ENCODE measurements at regions of chr1 and their contacts with region 1.

Region 1: GRCh38 chr1:232599178-232600041 is 30.5 kb downstream of the SIPA1L2 start:
- DNase-seq: peak; percentile 69
- H3K4me3 ChIP-seq: peak overlapping the region; percentile 29
- H3K27ac ChIP-seq: peak overlapping the region; percentile 42
- H3K4me1 ChIP-seq: peaks cover 73% of the 10 kb centered on the region
- CTCF ChIP-seq: no peak

Region 2: DNA sequence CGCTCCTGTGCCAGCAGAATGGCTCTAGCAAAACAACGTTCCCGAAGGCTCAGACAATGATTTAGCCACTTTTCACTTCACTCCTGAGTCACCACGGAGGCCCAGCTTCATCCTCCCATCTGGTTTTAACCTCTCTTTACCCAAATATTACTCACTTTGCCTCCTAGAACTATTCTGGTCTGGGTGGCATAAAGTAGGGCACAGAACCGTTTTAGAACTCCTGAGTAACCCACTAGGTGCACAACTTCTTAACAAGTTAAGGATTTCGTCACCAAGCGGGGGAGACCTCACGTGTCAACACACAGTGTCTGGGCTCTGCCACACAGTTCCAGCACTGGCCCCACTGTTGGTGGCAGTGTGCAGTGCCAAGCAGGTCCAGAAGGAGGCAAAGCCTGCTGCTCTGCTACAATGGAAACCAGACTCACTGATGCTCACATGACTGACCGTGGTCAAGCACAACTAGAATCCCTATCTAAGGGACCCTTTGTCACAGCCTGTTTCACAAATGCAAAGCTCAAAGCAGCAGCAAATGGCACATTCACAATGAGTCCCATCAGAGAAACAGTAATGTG is 91.2 kb before region 1 on chr1:
- CTCF ChIA-PET with region 1: no interaction called
- POLR2A ChIA-PET with region 1: no interaction called
- intact Hi-C with region 1: no loop called
- DNase-seq: no peak
- H3K4me3 ChIP-seq: no peak overlapping the region
- H3K27ac ChIP-seq: no peak overlapping the region
- H3K4me1 ChIP-seq: peaks cover 37% of the 10 kb centered on the region
- CTCF ChIP-seq: 0 out of 2 replicates have a peak, but pooled peaks have one; percentile 14

Region 3: GRCh38 chr1:232562855-232563510 is 36.4 kb before region 1 on chr1:
- CTCF ChIA-PET with region 1: interaction called, 4 read pairs
- POLR2A ChIA-PET with region 1: interaction called, 115 read pairs
- intact Hi-C with region 1: loop called (anchors 2 kb)
- DNase-seq: peak; percentile 85
- H3K4me3 ChIP-seq: peak overlapping the region; percentile 33
- H3K27ac ChIP-seq: peak overlapping the region; percentile 96
- H3K4me1 ChIP-seq: peaks cover 100% of the 10 kb centered on the region
- CTCF ChIP-seq: no peak

Region 4: DNA sequence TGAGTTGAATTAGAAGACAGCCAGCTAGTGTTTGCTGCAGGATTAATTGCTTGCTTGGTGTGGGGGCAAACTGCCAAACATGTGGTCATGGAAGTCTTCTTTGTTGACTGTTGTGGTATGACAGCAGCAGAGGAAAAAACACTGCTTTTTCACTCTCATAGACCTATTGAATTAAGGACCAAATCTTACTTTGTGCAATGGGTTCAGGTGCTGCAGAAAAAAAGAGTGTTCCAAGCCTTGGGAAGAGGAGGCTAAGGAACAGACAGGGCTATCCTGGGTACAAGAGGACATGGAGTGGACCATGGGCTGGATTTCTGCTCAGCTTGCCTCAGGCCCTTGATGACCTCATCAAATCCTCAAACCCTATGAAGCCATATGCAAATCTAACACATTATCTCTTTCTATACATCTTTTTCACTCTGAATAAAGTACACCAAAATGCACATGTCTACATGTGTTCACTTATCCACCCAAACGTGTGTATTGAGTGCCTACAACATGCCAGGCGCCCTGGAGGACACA is 31.0 kb before region 1 on chr1:
- CTCF ChIA-PET with region 1: interaction called, 4 read pairs
- POLR2A ChIA-PET with region 1: interaction called, 115 read pairs
- intact Hi-C with region 1: loop called (anchors 2 kb)
- DNase-seq: no peak
- H3K4me3 ChIP-seq: no peak overlapping the region
- H3K27ac ChIP-seq: peak overlapping the region; percentile 9
- H3K4me1 ChIP-seq: peaks cover 88% of the 10 kb centered on the region
- CTCF ChIP-seq: no peak

Region 5: DNA sequence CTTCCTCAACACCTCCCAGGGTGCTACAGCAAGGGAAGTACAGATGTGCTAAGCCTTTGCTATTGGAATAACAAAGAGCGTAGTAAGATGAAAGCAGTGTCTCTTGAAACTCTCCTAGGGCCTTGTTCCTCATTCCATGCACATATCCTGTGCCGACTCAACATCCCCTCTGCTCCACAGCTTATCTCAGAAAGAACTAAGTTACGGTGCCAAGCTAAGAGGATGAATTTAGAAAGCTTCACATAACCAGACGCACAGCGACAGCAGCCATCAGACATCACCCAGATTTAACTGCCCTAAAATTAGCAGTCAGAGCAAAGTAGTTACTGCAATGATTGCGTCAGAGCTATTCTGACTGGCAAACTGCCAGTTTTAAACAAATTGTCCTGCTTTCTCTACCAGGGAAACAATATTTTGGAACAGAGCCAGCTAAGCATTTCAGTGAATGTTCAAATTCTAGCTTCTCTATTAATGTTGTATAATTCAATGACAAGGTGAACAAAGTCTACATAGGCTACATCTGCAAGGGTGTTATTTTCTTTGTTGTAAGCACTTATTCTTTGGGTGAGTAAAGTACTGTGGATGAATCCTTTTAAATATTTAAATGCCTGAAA is 21.1 kb after region 1 on chr1:
- CTCF ChIA-PET with region 1: interaction called, 3 read pairs
- POLR2A ChIA-PET with region 1: interaction called, 23 read pairs
- intact Hi-C with region 1: no loop called
- DNase-seq: peak; percentile 69
- H3K4me3 ChIP-seq: peak overlapping the region; percentile 39
- H3K27ac ChIP-seq: peak overlapping the region; percentile 54
- H3K4me1 ChIP-seq: peaks cover 67% of the 10 kb centered on the region
- CTCF ChIP-seq: no peak